ENCODE measurements at regions of chr6 and their contacts with region 1.

Region 1: DNA sequence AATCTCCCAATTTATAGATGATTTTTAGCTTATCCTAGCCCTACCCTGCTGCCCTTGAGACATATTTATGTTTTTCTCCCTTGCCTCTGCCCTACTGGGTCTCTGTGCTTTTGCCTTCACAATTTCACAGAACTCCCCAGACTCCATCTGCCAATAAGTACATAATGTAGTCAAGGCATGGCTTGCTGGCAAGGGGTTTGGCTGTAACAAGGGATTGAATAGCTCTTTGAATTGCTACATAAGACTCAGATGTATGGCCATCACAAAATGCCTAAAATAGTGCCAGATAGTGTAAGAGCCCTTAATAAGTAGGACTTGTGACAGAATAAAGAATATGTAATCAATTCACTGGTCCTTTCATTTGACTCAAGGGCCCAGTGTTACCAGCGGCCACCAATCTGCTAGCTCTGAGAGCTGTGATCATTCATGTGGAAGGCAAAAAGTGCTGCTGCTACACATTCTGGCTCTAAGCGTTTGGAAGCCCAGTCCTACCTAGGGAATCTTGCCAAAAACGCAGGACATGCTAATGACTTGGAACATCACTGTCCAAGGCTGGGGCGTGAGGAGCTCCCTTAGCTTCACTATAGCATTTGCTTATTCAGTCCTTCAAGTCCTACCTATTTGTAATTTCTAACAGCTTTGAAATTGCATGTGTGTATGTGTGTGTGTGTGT is 20.5 kb downstream of the CLVS2 start:
- DNase-seq: no peak
- H3K4me3 ChIP-seq: no peak overlapping the region
- H3K27ac ChIP-seq: no peak overlapping the region
- H3K4me1 ChIP-seq: no peaks in the 10 kb centered on the region
- H3K27me3 ChIP-seq: no peaks in the 10 kb centered on the region
- CTCF ChIP-seq: no peak
- POLR2A ChIP-seq: no peak

Region 2: GRCh38 chr6:123808556-123808955 is 792.0 kb after region 1 on chr6:
- intact Hi-C with region 1: loop called (anchors 5 kb)
- DNase-seq: peak in 1 of 2 donors; percentile 33
- H3K4me3 ChIP-seq: no peak overlapping the region
- H3K27ac ChIP-seq: no peak overlapping the region
- H3K4me1 ChIP-seq: no peaks in the 10 kb centered on the region
- H3K27me3 ChIP-seq: peaks cover 0 to 15% of the 10 kb centered on the region in 2 donors
- CTCF ChIP-seq: no peak
- POLR2A ChIP-seq: no peak

Measured in breast epithelium (tissue), 4 donors.